ENCODE measurements at regions of chr1 and their contacts with region 1.

Region 1: GRCh38 chr1:53945433-53946251 is at the start of gene IFT25:
- DNase-seq: peak; percentile 96 to 100 (median 98)
- ATAC-seq: peak; percentile 81
- H3K4me3 ChIP-seq: peak within 1 kb of the TSS; percentile 81 to 94
- H3K4me3 Mint-ChIP-seq: peak within 1 kb of the TSS; percentile 98
- H3K27ac ChIP-seq: peak within 1 kb of the TSS; percentile 58 to 88
- H3K27ac Mint-ChIP-seq: peak within 1 kb of the TSS; percentile 96
- H3K4me1 ChIP-seq: peaks cover 27% of the 10 kb centered on the region
- H3K4me1 Mint-ChIP-seq: peaks cover 57% of the 10 kb centered on the region
- H3K27me3 ChIP-seq: no peaks in the 10 kb centered on the region
- H3K27me3 Mint-ChIP-seq: no peaks in the 10 kb centered on the region
- CTCF ChIP-seq: no peak
- total RNA-seq, gene IFT25: 12.8 to 13.1 TPM

Region 2: DNA sequence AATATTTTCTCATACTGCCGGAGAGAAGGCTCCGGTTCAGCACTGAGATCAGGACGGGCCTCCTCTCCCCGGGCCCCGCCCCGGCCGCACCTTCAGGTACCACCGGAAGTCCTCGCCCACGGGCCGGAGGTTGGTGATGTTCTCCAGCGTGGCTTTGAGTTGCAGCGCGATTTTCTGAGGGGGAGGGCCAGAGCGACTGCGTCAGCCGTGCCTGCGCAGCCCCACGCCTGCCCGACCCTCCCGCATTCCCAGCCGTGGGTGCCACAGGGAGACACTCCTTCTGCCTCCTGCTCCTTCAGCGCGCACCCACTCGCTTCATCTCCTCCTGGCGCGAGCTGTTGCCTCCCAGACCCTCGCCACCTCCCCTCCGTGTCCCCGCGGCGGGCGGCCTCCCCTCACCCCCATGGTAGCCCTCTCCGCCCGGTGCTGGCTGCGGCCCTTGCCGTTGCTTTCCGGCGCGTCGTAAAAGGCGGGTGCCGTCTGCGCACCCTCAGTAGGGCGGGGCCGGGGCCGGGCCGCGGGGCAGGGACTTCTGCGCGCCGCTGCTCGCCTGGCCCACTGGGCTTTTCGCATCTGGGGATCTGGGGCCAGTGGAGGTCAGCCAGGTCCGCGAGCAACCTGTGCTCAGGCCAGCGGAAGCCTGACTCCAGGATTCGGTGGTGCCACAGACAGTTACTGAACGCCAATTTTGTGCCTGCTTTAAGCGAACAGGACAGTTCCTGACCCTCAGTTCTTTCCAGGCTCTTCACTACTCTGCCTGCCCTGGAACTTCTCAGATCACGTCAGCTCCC is 725.3 kb before region 1 on chr1 and contains the start of gene CZIB:
- CTCF ChIA-PET with region 1: no interaction called
- POLR2A ChIA-PET with region 1: no interaction called
- intact Hi-C with region 1: loop called in 1 of 2 experiments (anchors 10 kb)
- DNase-seq: peak; percentile 83 to 95 (median 92)
- ATAC-seq: peak; percentile 92
- H3K4me3 ChIP-seq: peak within 1 kb of the TSS; percentile 80 to 92
- H3K4me3 Mint-ChIP-seq: peak within 1 kb of the TSS; percentile 94
- H3K27ac ChIP-seq: peak within 1 kb of the TSS; percentile 94
- H3K27ac Mint-ChIP-seq: peak within 1 kb of the TSS; percentile 98
- H3K4me1 ChIP-seq: peaks cover 16% of the 10 kb centered on the region
- H3K4me1 Mint-ChIP-seq: peaks cover 18% of the 10 kb centered on the region
- H3K27me3 ChIP-seq: no peaks in the 10 kb centered on the region
- H3K27me3 Mint-ChIP-seq: no peaks in the 10 kb centered on the region
- CTCF ChIP-seq: no peak
- total RNA-seq, gene CZIB: 26.7 to 27.4 TPM

Region 3: GRCh38 chr1:53837924-53838652 is 107.6 kb before region 1 on chr1 and contains the start of gene NDC1:
- CTCF ChIA-PET with region 1: no interaction called
- POLR2A ChIA-PET with region 1: interaction called, 4 read pairs
- intact Hi-C with region 1: loop called (anchors 1 kb)
- DNase-seq: peak; percentile 77 to 96 (median 88)
- ATAC-seq: peak; percentile 90
- H3K4me3 ChIP-seq: peak within 1 kb of the TSS; percentile 82 to 93
- H3K4me3 Mint-ChIP-seq: peak within 1 kb of the TSS; percentile 91
- H3K27ac ChIP-seq: peak within 1 kb of the TSS; percentile 91 to 100
- H3K27ac Mint-ChIP-seq: peak within 1 kb of the TSS; percentile 98
- H3K4me1 ChIP-seq: peaks cover 16% of the 10 kb centered on the region
- H3K4me1 Mint-ChIP-seq: peaks cover 26% of the 10 kb centered on the region
- H3K27me3 ChIP-seq: no peaks in the 10 kb centered on the region
- H3K27me3 Mint-ChIP-seq: peaks cover 3% of the 10 kb centered on the region
- CTCF ChIP-seq: no peak
- total RNA-seq, gene NDC1: 6.1 to 6.6 TPM

Region 4: GRCh38 chr1:53878492-53879105 is 67.0 kb before region 1 on chr1:
- CTCF ChIA-PET with region 1: interaction called, 5 read pairs
- POLR2A ChIA-PET with region 1: no interaction called
- intact Hi-C with region 1: loop called in 1 of 2 experiments (anchors 2 kb)
- DNase-seq: peak in 2 of 9 experiments; percentile 40 to 51
- ATAC-seq: no peak
- H3K4me3 ChIP-seq: no peak overlapping the region
- H3K4me3 Mint-ChIP-seq: no peak overlapping the region
- H3K27ac ChIP-seq: no peak overlapping the region
- H3K27ac Mint-ChIP-seq: no peak overlapping the region
- H3K4me1 ChIP-seq: no peaks in the 10 kb centered on the region
- H3K4me1 Mint-ChIP-seq: peaks cover 8% of the 10 kb centered on the region
- H3K27me3 ChIP-seq: no peaks in the 10 kb centered on the region
- H3K27me3 Mint-ChIP-seq: no peaks in the 10 kb centered on the region
- CTCF ChIP-seq: no peak

Region 5: GRCh38 chr1:53929246-53929960 is 16.2 kb before region 1 on chr1:
- CTCF ChIA-PET with region 1: no interaction called
- POLR2A ChIA-PET with region 1: interaction called, 11 read pairs
- intact Hi-C with region 1: no loop called
- DNase-seq: no peak
- ATAC-seq: no peak
- H3K4me3 ChIP-seq: no peak overlapping the region
- H3K4me3 Mint-ChIP-seq: no peak overlapping the region
- H3K27ac ChIP-seq: no peak overlapping the region
- H3K27ac Mint-ChIP-seq: no peak overlapping the region
- H3K4me1 ChIP-seq: no peaks in the 10 kb centered on the region
- H3K4me1 Mint-ChIP-seq: peaks cover 4% of the 10 kb centered on the region
- H3K27me3 ChIP-seq: no peaks in the 10 kb centered on the region
- H3K27me3 Mint-ChIP-seq: no peaks in the 10 kb centered on the region
- CTCF ChIP-seq: no peak

Region 6: GRCh38 chr1:53968125-53968513 is 22.5 kb after region 1 on chr1:
- CTCF ChIA-PET with region 1: no interaction called
- POLR2A ChIA-PET with region 1: no interaction called
- intact Hi-C with region 1: no loop called
- DNase-seq: no peak
- ATAC-seq: no peak
- H3K4me3 ChIP-seq: no peak overlapping the region
- H3K4me3 Mint-ChIP-seq: no peak overlapping the region
- H3K27ac ChIP-seq: no peak overlapping the region
- H3K27ac Mint-ChIP-seq: no peak overlapping the region
- H3K4me1 ChIP-seq: no peaks in the 10 kb centered on the region
- H3K4me1 Mint-ChIP-seq: no peaks in the 10 kb centered on the region
- H3K27me3 ChIP-seq: no peaks in the 10 kb centered on the region
- H3K27me3 Mint-ChIP-seq: no peaks in the 10 kb centered on the region
- CTCF ChIP-seq: no peak

Region 7: DNA sequence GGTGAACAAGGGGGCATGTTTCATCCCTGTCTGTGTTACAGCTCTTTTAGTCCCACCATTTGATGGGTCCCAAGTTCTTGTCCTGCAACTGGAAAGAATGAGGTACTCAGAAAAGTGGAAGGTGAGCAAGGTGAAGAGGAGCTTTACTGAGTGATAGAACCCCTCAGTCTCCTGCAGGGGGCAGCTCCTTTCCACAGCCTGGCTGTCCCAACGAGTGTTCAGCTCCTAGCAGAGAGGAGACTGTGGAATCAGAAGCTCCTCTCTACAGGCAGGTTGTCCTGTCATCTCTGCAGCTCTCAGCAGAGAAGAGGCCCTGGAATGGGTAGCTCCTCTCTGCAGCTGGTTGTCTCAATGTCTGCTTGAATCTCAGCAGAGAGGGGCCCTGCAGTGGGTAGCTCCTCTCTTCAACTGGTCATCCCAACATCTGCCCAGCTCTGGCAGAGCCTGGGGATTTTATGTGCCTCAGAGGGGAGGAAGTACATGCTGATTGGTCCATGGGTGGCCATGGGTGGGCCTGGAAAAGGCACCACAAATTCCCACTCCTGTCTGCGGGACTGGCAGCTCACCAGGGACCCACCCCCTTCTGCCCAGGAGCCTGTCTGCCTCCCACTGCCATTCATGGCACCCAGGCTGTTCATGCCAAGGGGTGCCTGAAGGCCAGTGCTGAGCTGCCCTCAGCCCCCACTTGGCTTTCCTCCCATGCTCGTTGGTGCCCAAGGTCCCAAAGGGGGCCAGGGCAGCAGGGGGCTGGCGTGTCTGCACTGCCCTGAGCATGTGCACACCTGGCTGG is 46.6 kb after region 1 on chr1:
- CTCF ChIA-PET with region 1: no interaction called
- POLR2A ChIA-PET with region 1: no interaction called
- intact Hi-C with region 1: no loop called
- DNase-seq: no peak
- ATAC-seq: no peak
- H3K4me3 ChIP-seq: no peak overlapping the region
- H3K4me3 Mint-ChIP-seq: no peak overlapping the region
- H3K27ac ChIP-seq: no peak overlapping the region
- H3K27ac Mint-ChIP-seq: no peak overlapping the region
- H3K4me1 ChIP-seq: no peaks in the 10 kb centered on the region
- H3K4me1 Mint-ChIP-seq: no peaks in the 10 kb centered on the region
- H3K27me3 ChIP-seq: no peaks in the 10 kb centered on the region
- H3K27me3 Mint-ChIP-seq: no peaks in the 10 kb centered on the region
- CTCF ChIP-seq: no peak

Region 8: DNA sequence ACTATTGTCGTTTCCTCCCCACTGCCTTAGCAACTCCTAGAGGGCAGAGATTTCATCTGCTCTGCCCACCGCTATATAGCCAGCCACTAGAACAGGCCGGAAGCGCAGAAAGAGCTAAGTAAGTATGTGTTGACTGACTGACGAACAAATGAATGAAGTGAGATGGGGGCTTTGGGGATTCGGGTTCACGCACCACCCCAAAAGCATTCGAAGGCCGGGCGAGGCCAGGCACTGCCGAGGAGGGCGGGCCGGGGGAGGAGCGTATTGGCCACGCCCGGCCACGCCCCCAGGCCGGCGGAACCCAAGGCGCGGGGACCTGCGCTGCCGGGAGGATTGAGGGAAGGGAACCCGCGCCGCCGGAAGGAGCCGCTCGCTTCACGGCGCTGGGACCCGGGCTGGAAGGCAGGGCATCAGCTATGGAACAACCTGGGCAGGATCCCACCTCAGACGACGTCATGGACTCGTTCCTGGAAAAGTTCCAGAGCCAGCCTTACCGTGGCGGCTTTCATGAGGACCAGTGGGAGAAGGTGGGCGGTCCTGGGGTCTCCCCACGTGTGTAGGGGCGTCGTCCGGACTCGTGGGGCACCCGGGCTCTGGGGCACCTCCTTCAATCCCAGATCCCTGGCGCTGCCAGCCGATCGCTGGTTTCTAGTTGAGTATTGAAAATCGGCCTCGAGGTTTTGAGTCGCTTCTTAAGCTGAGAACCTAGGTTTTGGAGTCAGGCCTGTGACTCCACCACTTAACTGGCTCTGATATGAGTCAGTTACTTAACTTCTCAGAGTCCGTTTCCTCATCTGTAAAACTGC is 770.1 kb after region 1 on chr1 and contains the start of gene TTC4:
- CTCF ChIA-PET with region 1: no interaction called
- POLR2A ChIA-PET with region 1: no interaction called
- intact Hi-C with region 1: loop called in 1 of 2 experiments (anchors 1 kb)
- DNase-seq: peak; percentile 68 to 92 (median 82)
- ATAC-seq: peak; percentile 98
- H3K4me3 ChIP-seq: peak within 1 kb of the TSS; percentile 77 to 95
- H3K4me3 Mint-ChIP-seq: peak within 1 kb of the TSS; percentile 86
- H3K27ac ChIP-seq: peak within 1 kb of the TSS; percentile 59 to 60
- H3K27ac Mint-ChIP-seq: peak within 1 kb of the TSS; percentile 85
- H3K4me1 ChIP-seq: peaks cover 18% of the 10 kb centered on the region
- H3K4me1 Mint-ChIP-seq: peaks cover 33% of the 10 kb centered on the region
- H3K27me3 ChIP-seq: no peaks in the 10 kb centered on the region
- H3K27me3 Mint-ChIP-seq: no peaks in the 10 kb centered on the region
- CTCF ChIP-seq: no peak
- total RNA-seq, gene TTC4: 7.8 to 7.9 TPM